GM12878 (cell line): ENCODE measurements at regions of chr2 and their contacts with region 1.

Region 1: DNA sequence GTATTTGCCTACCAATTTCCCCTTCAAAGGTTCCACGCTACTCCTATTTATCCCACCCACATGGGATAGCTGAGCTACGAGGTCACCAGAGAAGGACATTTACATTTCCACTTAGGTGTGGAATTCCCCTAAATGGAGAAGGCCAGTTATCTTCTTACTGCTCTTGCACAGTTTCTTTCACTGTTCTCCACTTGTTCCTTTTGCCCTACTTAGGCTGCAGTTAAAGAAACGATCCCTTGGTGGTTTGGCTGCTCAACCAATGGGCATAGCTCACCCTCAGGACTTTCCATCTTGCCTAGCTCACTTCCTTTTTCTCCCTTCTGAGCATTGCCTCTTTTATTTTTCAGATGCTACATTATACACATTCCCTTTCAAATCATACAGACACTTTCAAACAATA is 11.2 kb upstream of the NABP1 start:
- DNase-seq: peak; percentile 79
- ATAC-seq: peak; percentile 91
- H3K4me3 ChIP-seq: no peak overlapping the region
- H3K27ac ChIP-seq: peak overlapping the region; percentile 65
- H3K4me1 ChIP-seq: peaks cover 30% of the 10 kb centered on the region
- H3K27me3 ChIP-seq: no peaks in the 10 kb centered on the region
- CTCF ChIP-seq: no peak
- EP300 ChIP-seq: 0 out of 4 replicates have a peak, but pooled peaks of 1 of the 2 experiments have one; percentile 25
- POLR2A ChIP-seq: no peak
- RAD21 ChIP-seq: no peak

Region 2: GRCh38 chr2:190880378-190881073 is 786.2 kb before region 1 on chr2 and contains the start of gene GLS:
- CTCF ChIA-PET with region 1: no interaction called
- POLR2A ChIA-PET with region 1: no interaction called
- RAD21 ChIA-PET with region 1: no interaction called
- SMC1A ChIA-PET with region 1: no interaction called
- in situ Hi-C with region 1: loop called (anchors 25 kb)
- intact Hi-C with region 1: no loop called
- DNase-seq: peak; percentile 86
- ATAC-seq: peak; percentile 83
- H3K4me3 ChIP-seq: peak within 1 kb of the TSS; percentile 94
- H3K27ac ChIP-seq: peak within 1 kb of the TSS; percentile 95
- H3K4me1 ChIP-seq: peaks cover 6% of the 10 kb centered on the region; the same call in 1 of the 2 replicates
- H3K27me3 ChIP-seq: no peaks in the 10 kb centered on the region
- CTCF ChIP-seq: no peak
- EP300 ChIP-seq: 0 out of 4 replicates have a peak, but pooled peaks of 1 of the 2 experiments have one; percentile 20
- POLR2A ChIP-seq: peak; percentile 99
- RAD21 ChIP-seq: no peak
- polyA plus RNA-seq, gene GLS: 23.7 to 30.5 TPM

Region 3: GRCh38 chr2:191617575-191617974 is 49.2 kb before region 1 on chr2:
- CTCF ChIA-PET with region 1: interaction called, 4 read pairs
- POLR2A ChIA-PET with region 1: interaction called, 5 read pairs
- RAD21 ChIA-PET with region 1: interaction called, 52 read pairs
- SMC1A ChIA-PET with region 1: interaction called, 41 read pairs
- in situ Hi-C with region 1: no loop called
- intact Hi-C with region 1: no loop called
- DNase-seq: peak; percentile 76
- ATAC-seq: peak; percentile 88
- H3K4me3 ChIP-seq: no peak overlapping the region
- H3K27ac ChIP-seq: peak overlapping the region; percentile 26; the same call in 1 of the 2 replicates
- H3K4me1 ChIP-seq: peaks cover 13% of the 10 kb centered on the region
- H3K27me3 ChIP-seq: no peaks in the 10 kb centered on the region
- CTCF ChIP-seq: no peak
- EP300 ChIP-seq: peak; percentile 73 to 77; a peak in 3 of 4 replicates
- POLR2A ChIP-seq: no peak
- RAD21 ChIP-seq: peak; percentile 13; the same call in 1 of the 2 replicates

Region 4: DNA sequence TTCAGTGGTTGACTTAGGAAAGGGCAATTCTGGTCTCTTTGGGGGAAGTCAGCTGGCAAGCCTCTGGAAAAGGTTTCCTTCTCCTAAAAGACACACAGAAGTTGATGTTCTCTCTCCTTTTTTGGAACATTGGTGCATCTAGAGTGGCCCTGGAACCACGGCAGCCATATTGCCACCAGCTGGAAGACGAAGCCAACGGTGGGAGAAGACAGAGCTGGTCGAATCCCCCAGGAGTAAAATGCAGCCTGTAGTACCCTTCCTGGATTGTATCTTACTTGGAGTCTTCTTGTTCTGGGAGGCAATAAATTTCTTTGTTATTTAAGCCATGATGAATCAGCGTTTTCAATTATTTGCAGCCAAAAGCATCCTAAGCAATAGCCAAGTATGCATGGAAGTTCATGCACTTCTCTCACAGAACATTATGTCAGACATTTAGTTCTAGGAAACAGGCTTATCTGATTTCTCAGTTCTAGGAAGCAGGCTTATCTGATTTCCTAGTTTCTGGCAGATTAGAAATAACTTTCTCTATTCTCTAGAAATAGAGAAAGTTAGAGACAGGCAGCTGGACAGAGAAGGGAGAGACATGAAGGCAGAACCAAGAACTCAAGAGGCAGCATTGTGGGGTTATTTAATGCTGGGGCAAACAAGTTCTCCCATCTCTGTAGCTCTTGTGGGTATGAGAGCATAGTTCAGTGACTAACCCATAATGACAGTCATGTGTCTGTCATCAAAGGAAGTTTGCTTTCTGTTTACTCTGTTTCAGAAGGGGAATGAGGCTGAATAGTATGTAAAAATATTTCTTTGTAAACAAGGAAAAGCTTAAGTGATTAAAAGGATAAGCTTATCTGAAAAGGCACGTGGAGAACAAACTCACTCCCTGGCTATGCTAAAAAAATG is 29.3 kb before region 1 on chr2:
- CTCF ChIA-PET with region 1: interaction called, 3 read pairs
- POLR2A ChIA-PET with region 1: no interaction called
- RAD21 ChIA-PET with region 1: interaction called, 3 read pairs
- SMC1A ChIA-PET with region 1: interaction called, 24 read pairs
- in situ Hi-C with region 1: no loop called
- intact Hi-C with region 1: no loop called
- DNase-seq: no peak
- ATAC-seq: peak; percentile 78
- H3K4me3 ChIP-seq: no peak overlapping the region
- H3K27ac ChIP-seq: no peak overlapping the region
- H3K4me1 ChIP-seq: peaks cover 34% of the 10 kb centered on the region
- H3K27me3 ChIP-seq: no peaks in the 10 kb centered on the region
- CTCF ChIP-seq: no peak
- EP300 ChIP-seq: no peak
- POLR2A ChIP-seq: no peak
- RAD21 ChIP-seq: no peak

Region 5: DNA sequence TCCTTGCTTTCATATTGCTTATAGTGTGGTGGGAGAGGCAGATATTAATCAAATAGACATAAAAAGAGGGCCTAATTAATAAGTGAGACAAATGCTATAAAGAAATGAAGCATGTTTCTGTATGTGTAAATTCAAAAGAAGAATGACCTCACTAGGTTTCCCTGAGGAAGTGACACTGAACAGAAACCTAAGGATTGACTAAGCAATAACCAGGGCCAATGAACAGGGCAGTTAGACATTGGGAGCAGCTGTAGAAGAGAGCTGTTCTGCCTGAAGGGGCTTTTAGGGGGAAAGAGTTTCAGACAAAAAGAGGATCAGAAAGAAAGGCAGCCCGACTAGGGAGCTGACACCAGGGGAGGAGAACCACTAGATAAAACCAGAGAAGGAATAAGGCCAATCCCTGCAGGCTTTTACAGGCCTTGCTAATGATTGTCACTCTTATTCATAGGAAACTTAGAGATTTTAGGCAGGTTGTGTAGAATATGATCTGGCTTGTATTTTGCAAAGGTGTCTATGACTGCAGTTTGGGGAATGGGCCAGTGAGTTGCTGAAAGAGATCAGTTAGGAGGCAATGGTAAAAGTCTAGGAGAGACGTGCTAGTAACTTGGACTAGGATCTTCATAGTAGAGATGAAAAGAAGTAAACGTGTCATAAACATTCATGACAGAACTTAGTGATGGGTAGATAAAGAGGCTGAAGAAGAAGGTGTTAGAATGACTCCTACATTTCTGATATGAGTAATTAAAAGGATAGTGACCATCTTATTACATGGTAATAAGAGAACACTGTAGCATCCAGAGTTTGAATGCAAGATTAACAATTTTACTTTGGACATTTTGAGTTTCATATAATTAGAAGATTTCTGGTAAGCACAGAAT is 15.6 kb before region 1 on chr2:
- CTCF ChIA-PET with region 1: interaction called, 3 read pairs
- POLR2A ChIA-PET with region 1: interaction called, 6 read pairs
- RAD21 ChIA-PET with region 1: interaction called, 16 read pairs
- SMC1A ChIA-PET with region 1: interaction called, 29 read pairs
- in situ Hi-C with region 1: no loop called
- intact Hi-C with region 1: loop called (anchors 2 kb)
- DNase-seq: peak; percentile 73
- ATAC-seq: peak; percentile 98
- H3K4me3 ChIP-seq: no peak overlapping the region
- H3K27ac ChIP-seq: peak overlapping the region; percentile 38; the same call in 1 of the 2 replicates
- H3K4me1 ChIP-seq: 0 out of 2 replicates have a peak, but pooled peaks cover 6% of the 10 kb centered on the region
- H3K27me3 ChIP-seq: no peaks in the 10 kb centered on the region
- CTCF ChIP-seq: no peak
- EP300 ChIP-seq: peak; percentile 66 to 90; a peak in 2 of 4 replicates
- POLR2A ChIP-seq: no peak
- RAD21 ChIP-seq: peak; percentile 25; the same call in 1 of the 2 replicates

Region 6: GRCh38 chr2:191656391-191656790 is 10.3 kb before region 1 on chr2:
- CTCF ChIA-PET with region 1: interaction called, 3 read pairs
- POLR2A ChIA-PET with region 1: interaction called, 6 read pairs
- RAD21 ChIA-PET with region 1: interaction called, 16 read pairs
- SMC1A ChIA-PET with region 1: interaction called, 29 read pairs
- in situ Hi-C with region 1: no loop called
- intact Hi-C with region 1: loop called (anchors 2 kb)
- DNase-seq: no peak
- ATAC-seq: no peak
- H3K4me3 ChIP-seq: no peak overlapping the region
- H3K27ac ChIP-seq: no peak overlapping the region
- H3K4me1 ChIP-seq: no peaks in the 10 kb centered on the region
- H3K27me3 ChIP-seq: no peaks in the 10 kb centered on the region
- CTCF ChIP-seq: no peak
- EP300 ChIP-seq: no peak
- POLR2A ChIP-seq: no peak
- RAD21 ChIP-seq: no peak

Region 7: GRCh38 chr2:191740016-191740419 is 73.3 kb after region 1 on chr2:
- CTCF ChIA-PET with region 1: no interaction called
- POLR2A ChIA-PET with region 1: no interaction called
- RAD21 ChIA-PET with region 1: no interaction called
- SMC1A ChIA-PET with region 1: no interaction called
- in situ Hi-C with region 1: no loop called
- intact Hi-C with region 1: no loop called
- DNase-seq: peak; percentile 20
- ATAC-seq: peak; percentile 93
- H3K4me3 ChIP-seq: no peak overlapping the region
- H3K27ac ChIP-seq: no peak overlapping the region
- H3K4me1 ChIP-seq: peaks cover 4% of the 10 kb centered on the region; the same call in 1 of the 2 replicates
- H3K27me3 ChIP-seq: no peaks in the 10 kb centered on the region
- CTCF ChIP-seq: no peak
- EP300 ChIP-seq: no peak
- POLR2A ChIP-seq: no peak
- RAD21 ChIP-seq: no peak

Region 8: DNA sequence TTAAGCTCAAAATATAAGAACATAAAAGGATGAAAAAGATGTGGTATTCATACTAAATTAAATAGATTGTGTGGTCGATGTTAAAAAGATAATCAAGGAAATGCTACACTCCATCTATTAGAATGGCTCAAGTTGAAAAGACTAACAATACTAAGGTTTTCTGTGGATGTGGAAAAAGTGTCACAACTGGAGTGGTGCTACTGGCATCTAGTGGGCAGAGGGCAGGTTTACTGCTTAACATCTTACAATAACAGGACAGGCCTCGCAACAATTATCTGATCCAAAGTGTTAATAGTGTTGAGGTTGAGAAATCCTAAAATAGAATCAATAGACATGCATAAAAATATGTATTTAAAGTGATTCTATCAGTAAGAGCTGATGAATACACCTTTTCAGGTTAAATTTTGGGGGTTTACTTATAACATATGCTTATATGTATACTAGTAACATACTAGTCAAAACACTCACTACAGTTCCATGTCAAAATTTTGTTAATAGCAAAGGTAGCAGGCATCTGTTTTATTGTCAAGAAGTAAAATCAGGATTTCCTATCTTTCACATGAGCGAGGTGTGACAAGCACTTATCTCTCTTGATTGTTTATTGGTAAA is 619.5 kb after region 1 on chr2:
- CTCF ChIA-PET with region 1: no interaction called
- POLR2A ChIA-PET with region 1: no interaction called
- RAD21 ChIA-PET with region 1: no interaction called
- SMC1A ChIA-PET with region 1: no interaction called
- in situ Hi-C with region 1: no loop called
- intact Hi-C with region 1: no loop called
- DNase-seq: no peak
- ATAC-seq: peak; percentile 59
- H3K4me3 ChIP-seq: no peak overlapping the region
- H3K27ac ChIP-seq: no peak overlapping the region
- H3K4me1 ChIP-seq: no peaks in the 10 kb centered on the region
- H3K27me3 ChIP-seq: no peaks in the 10 kb centered on the region
- CTCF ChIP-seq: peak; percentile 32 to 38 (median 36); a peak in 4 of 6 replicates
- EP300 ChIP-seq: no peak
- POLR2A ChIP-seq: no peak
- RAD21 ChIP-seq: peak; percentile 43